Activated T-helper 1 cell treated with anti-CD3 and anti-CD28 coated beads, Interleukin-12 subunit alpha, Interleukin-12 subunit beta, Interleukin-2, Interleukin-4 antibody, amounts not matched to agents 30 ng/mL and 10 ng/mL and 1 ng/mL, durations not matched to agents 14 hours and 24 hours and 36 hours (primary cell): ENCODE measurements at regions of chr3 and their contacts with region 1.

Region 1: GRCh38 chr3:32781210-32781968 is 36.4 kb upstream of the TRIM71 start:
- DNase-seq: peak; percentile 59
- H3K4me3 Mint-ChIP-seq: peak overlapping the region; percentile 84
- H3K27ac Mint-ChIP-seq: peak overlapping the region; percentile 19
- H3K4me1 Mint-ChIP-seq: peaks cover 5% of the 10 kb centered on the region
- H3K27me3 Mint-ChIP-seq: peaks cover 7% of the 10 kb centered on the region

Region 2: DNA sequence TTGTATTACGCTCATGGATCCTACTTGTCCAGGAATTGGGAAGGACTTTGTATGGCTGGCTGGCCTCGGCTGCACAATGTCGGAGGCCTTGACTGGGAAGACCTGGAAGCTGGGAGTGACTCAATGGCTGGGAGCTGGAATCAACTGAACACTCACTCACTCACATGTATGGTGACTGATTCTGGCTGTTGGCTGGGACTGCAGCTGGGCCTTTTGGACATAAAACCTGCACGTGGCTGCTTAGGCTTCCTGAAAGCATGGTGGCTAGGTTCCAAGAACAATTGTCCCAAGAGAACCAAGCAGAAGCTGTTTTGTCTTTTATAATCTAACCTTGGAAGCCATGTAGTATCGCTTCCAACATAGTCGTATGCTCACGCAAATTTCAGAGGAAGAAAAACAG is 580.9 kb before region 1 on chr3:
- intact Hi-C with region 1: no loop called
- DNase-seq: no peak
- H3K4me3 Mint-ChIP-seq: no peak overlapping the region
- H3K27ac Mint-ChIP-seq: no peak overlapping the region
- H3K4me1 Mint-ChIP-seq: no peaks in the 10 kb centered on the region
- H3K27me3 Mint-ChIP-seq: peaks cover 19% of the 10 kb centered on the region

Region 3: DNA sequence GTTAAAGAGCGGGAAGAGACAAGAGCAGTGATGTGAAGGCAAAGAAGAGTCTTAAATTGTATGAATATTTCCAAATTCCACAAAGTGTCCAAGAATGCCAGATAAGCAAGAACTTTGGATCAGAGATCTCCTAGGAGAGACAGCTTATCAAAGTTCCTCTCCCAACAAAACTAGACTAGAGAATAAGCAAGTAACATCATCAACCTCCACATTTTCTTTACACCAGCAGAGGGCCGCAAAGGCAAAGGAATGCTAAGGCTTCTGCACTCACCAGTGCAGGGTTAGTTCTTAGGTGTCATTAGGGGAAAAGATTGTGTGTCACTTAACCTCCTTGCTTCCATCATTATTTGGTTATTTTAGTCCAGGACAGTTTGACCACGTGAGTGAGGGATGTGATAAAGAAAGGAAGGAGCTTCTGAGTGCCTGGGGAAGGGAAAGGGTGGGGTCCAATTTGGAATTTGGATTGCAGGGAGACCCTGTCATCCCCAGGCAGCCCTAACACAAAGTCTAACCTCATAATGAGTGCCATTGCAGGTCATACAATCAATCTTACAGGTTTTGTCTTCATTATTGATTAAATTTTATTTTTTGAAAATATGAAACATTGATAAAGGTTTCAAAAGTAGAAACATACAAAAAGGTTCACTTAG is 271.2 kb before region 1 on chr3:
- intact Hi-C with region 1: loop called (anchors 1 kb)
- DNase-seq: peak; percentile 54
- H3K4me3 Mint-ChIP-seq: no peak overlapping the region
- H3K27ac Mint-ChIP-seq: no peak overlapping the region
- H3K4me1 Mint-ChIP-seq: no peaks in the 10 kb centered on the region
- H3K27me3 Mint-ChIP-seq: peaks cover 3% of the 10 kb centered on the region

Region 4: GRCh38 chr3:32733631-32734229 is 47.7 kb before region 1 on chr3:
- intact Hi-C with region 1: loop called (anchors 1 kb)
- DNase-seq: no peak
- H3K4me3 Mint-ChIP-seq: no peak overlapping the region
- H3K27ac Mint-ChIP-seq: no peak overlapping the region
- H3K4me1 Mint-ChIP-seq: no peaks in the 10 kb centered on the region
- H3K27me3 Mint-ChIP-seq: no peaks in the 10 kb centered on the region

Region 5: GRCh38 chr3:32816439-32817256 is 35.3 kb after region 1 on chr3:
- intact Hi-C with region 1: loop called (anchors 1 kb)
- DNase-seq: no peak
- H3K4me3 Mint-ChIP-seq: peak overlapping the region; percentile 72
- H3K27ac Mint-ChIP-seq: peak overlapping the region; percentile 61
- H3K4me1 Mint-ChIP-seq: peaks cover 13% of the 10 kb centered on the region
- H3K27me3 Mint-ChIP-seq: peaks cover 58% of the 10 kb centered on the region

Region 6: DNA sequence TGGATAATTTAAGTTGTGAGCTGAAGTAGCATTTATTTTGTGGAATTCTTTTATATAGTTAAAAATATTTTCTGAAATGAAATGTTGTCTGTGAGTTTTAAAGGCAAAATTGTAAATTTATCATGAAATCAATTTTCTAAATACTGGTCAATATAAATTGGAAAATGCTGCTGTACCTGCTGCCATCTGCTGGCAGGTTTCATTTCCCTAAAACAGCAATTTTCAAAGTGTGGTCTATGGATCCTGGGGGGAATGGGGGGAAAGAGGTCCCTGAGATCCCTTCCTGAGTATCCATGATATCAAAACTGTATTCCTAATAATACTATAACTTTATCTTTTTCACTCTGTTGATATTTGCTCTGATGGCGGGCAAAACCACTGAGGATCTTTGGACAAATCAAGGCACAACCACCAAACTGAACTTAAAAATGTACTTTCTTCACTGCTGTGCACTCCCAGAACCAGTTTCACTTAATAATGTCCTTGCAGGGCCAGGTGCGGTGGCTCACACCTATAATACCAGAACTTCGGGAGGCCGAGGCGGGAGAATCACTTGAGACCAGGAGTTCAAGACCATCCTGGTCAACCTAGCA is 152.9 kb after region 1 on chr3:
- intact Hi-C with region 1: loop called (anchors 1 kb)
- DNase-seq: no peak
- H3K4me3 Mint-ChIP-seq: no peak overlapping the region
- H3K27ac Mint-ChIP-seq: no peak overlapping the region
- H3K4me1 Mint-ChIP-seq: no peaks in the 10 kb centered on the region
- H3K27me3 Mint-ChIP-seq: peaks cover 2% of the 10 kb centered on the region